ENCODE measurements at regions of chr21 and their contacts with region 1.

Region 1: DNA sequence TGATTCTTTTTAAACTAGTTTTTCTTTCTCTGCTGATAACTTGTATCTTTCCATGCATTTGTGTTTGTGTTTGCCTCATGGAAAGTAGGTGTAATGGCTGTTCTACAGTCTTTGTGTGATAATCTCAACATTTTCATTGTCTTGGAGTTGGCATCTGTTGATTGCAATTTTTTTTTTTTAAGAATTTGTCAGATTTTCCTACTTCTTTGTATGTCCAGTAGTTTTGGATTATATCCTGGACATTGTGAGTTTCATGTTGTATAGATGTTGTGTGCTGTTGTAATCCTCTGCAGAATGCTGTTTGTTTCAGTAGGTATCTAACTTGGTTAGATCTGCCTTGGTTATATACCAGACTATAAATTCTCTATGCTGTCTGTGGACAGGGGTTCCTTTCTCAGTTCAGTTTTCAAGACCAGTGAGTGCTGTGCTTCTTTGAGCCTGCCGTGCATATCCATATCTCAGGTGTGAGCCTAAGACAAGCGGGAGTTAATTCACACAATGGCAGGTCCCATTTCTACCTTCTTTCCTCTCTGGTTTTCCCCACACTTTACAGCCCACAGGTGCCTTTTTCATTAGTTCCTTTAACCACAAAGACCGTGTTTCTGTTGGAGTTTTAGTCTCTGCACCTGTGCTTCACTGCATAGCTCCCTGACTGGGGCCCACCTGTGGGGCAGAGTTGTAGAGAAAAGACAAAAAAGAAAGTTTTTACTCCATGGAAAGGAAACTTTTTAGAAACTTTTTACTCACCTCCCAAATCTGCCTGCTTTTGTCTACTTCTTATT is 69.9 kb downstream of the ITSN1 start:
- DNase-seq: no peak
- H3K4me3 ChIP-seq: no peak overlapping the region
- H3K27ac ChIP-seq: no peak overlapping the region
- H3K4me1 ChIP-seq: peaks cover 6% of the 10 kb centered on the region
- H3K27me3 ChIP-seq: no peaks in the 10 kb centered on the region
- CTCF ChIP-seq: no peak

Region 2: DNA sequence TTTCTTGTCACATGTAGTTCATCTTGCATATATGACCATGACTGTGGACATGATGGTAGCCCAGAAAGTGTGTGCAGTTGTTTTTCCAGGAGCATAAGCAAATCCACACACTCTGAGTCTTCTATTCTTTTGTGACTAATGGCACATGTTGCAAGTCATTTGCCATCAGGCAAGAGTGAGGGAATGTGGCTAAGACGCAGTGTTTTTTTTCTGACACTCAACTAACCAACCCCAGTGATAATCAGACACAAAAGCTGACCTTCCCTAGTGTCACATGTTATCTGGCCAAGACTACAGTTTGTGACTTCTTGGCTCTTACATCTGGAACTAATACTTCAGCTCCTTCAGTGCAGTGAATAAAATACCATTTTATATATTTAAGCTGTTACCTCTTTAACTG is 38.9 kb after region 1 on chr21:
- CTCF ChIA-PET with region 1: no interaction called
- dilution Hi-C with region 1: loop called (anchors 5 kb)
- in situ Hi-C with region 1: no loop called
- intact Hi-C with region 1: no loop called
- DNase-seq: no peak
- H3K4me3 ChIP-seq: no peak overlapping the region
- H3K27ac ChIP-seq: no peak overlapping the region
- H3K4me1 ChIP-seq: no peaks in the 10 kb centered on the region
- H3K27me3 ChIP-seq: no peaks in the 10 kb centered on the region
- CTCF ChIP-seq: no peak

Region 3: GRCh38 chr21:33789697-33790096 is 77.5 kb after region 1 on chr21:
- CTCF ChIA-PET with region 1: no interaction called
- dilution Hi-C with region 1: loop called (anchors 5 kb)
- in situ Hi-C with region 1: no loop called
- intact Hi-C with region 1: no loop called
- DNase-seq: no peak
- H3K4me3 ChIP-seq: no peak overlapping the region
- H3K27ac ChIP-seq: no peak overlapping the region
- H3K4me1 ChIP-seq: no peaks in the 10 kb centered on the region
- H3K27me3 ChIP-seq: no peaks in the 10 kb centered on the region
- CTCF ChIP-seq: no peak

Region 4: DNA sequence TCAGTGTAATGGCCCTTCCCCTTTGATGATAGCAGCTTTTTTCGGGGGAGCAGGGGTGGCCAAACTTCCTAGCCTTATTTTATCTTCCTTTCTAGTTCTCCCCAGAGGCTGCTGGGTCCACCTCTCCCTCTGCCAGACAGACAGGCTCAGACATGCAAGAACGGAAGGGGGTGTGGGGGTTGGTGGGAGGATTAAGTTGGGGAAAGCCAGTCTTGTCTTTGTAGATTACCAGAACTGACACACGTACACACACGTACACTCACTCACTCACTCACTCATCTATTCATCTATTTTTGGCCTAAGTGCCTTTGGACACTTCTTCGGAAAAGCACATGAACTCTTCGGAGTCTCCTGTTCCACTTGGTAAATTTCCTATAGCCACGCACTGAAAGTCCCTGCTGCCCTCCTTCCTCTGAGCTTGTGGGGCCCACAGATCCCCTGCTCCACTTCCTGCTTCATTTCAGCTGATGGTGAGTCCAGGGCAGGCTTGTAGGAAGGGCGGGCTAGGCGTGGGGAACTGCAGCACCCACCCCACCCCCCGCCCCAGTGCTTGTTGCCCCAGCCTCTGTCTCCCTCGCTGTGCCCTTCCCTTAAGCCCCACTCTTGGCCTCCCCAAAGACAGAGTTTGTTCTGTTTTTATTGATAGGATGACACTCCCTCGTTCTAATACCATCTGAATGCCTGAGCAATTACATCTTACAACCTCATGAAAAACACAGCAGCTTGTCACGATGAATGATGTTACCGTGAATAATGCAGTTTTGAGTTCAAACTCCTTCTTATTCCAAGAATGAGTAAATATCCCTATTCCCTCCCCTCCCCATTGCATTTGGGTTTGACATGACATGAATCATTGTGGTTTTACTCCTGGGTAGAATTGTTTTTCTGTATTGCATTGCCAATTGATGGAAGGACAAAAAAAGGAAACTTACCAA is 264.1 kb after region 1 on chr21:
- CTCF ChIA-PET with region 1: no interaction called
- dilution Hi-C with region 1: no loop called
- in situ Hi-C with region 1: no loop called
- intact Hi-C with region 1: no loop called
- DNase-seq: peak; percentile 97
- H3K4me3 ChIP-seq: peak overlapping the region in 2 of 3 experiments; percentile 7
- H3K27ac ChIP-seq: peak overlapping the region; percentile 98
- H3K4me1 ChIP-seq: peaks cover 37% of the 10 kb centered on the region
- H3K27me3 ChIP-seq: no peaks in the 10 kb centered on the region
- CTCF ChIP-seq: no peak